OCI-LY7 (cell line): ENCODE measurements at regions of chr10 and their contacts with region 1.

Region 1: GRCh38 chr10:77641788-77642397 is 4.3 kb upstream of the KCNMA1 start:
- DNase-seq: peak; percentile 70
- H3K4me3 ChIP-seq: no peak overlapping the region
- H3K27ac ChIP-seq: no peak overlapping the region
- H3K4me1 ChIP-seq: no peaks in the 10 kb centered on the region
- CTCF ChIP-seq: peak; percentile 96

Region 2: GRCh38 chr10:77173615-77174461 is 468.1 kb before region 1 on chr10:
- CTCF ChIA-PET with region 1: no interaction called
- POLR2A ChIA-PET with region 1: no interaction called
- intact Hi-C with region 1: loop called (anchors 1 kb)
- DNase-seq: peak; percentile 63
- H3K4me3 ChIP-seq: no peak overlapping the region
- H3K27ac ChIP-seq: no peak overlapping the region
- H3K4me1 ChIP-seq: peaks cover 6% of the 10 kb centered on the region
- CTCF ChIP-seq: peak; percentile 91

Region 3: GRCh38 chr10:77251297-77252013 is 390.4 kb before region 1 on chr10:
- CTCF ChIA-PET with region 1: interaction called, 3 read pairs
- POLR2A ChIA-PET with region 1: no interaction called
- intact Hi-C with region 1: loop called (anchors 5 kb)
- DNase-seq: peak; percentile 1
- H3K4me3 ChIP-seq: no peak overlapping the region
- H3K27ac ChIP-seq: no peak overlapping the region
- H3K4me1 ChIP-seq: no peaks in the 10 kb centered on the region
- CTCF ChIP-seq: peak; percentile 59

Region 4: DNA sequence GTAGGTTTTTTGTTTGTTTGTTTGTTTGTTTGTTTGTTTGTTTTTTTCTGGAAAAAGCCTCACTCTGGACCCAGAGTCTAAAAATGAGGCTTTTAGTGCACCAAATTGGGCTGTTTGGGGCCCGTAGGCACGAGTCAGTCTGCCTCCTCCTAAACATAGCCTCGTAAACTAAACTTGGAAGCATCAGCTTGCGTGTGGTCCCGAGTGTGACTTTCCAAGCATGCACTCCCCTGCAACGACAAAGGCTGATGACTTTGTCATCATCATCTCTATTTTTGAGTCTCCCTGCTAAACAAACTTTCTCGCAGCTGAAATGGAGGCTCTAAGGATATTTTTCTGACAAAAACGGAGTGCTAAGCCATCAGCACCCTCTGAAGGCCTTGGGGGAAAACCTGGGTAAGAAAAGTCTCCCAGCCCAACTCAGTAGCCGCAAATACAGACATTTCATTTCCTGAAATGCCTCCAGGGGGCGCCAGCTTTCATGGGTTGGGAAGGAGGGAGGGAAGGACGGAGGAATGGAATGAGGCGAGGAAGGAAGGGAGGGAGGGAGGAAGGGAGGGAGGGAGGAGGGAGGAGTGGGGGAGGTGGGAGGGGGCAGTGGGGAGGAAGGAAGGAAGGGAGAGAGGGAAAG is 250.2 kb before region 1 on chr10:
- CTCF ChIA-PET with region 1: no interaction called
- POLR2A ChIA-PET with region 1: no interaction called
- intact Hi-C with region 1: loop called (anchors 5 kb)
- DNase-seq: peak; percentile 13
- H3K4me3 ChIP-seq: no peak overlapping the region
- H3K27ac ChIP-seq: no peak overlapping the region
- H3K4me1 ChIP-seq: no peaks in the 10 kb centered on the region
- CTCF ChIP-seq: peak; percentile 61

Region 5: DNA sequence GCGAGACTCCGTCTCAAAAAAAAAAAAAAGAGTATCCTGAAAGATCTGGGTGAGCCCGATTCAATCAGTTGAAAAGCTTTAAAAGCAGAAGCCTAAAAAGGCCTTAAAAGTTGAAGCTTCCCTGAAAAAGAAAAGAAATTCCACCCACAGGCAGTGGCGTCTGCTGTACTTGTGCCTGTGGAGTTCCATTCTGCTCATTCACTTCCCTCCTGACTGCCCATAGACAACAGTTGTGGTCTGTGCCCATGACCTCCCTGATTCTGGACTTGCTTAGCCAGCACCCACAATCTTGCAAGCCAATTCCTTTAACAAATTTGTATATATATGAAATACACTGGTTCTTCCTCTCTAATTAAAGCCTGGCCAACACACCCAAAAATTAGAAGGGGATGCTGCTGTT is 143.0 kb after region 1 on chr10:
- CTCF ChIA-PET with region 1: no interaction called
- POLR2A ChIA-PET with region 1: no interaction called
- intact Hi-C with region 1: no loop called
- DNase-seq: no peak
- H3K4me3 ChIP-seq: no peak overlapping the region
- H3K27ac ChIP-seq: no peak overlapping the region
- H3K4me1 ChIP-seq: no peaks in the 10 kb centered on the region
- CTCF ChIP-seq: no peak